ENCODE measurements at regions of chr7 and their contacts with region 1.

Region 1: GRCh38 chr7:150778738-150779301 is 21.3 kb downstream of the TMEM176B start:
- DNase-seq: peak; percentile 58 to 82 (median 79)
- H3K4me3 ChIP-seq: peak overlapping the region in 2 of 3 experiments; percentile 12 to 53
- H3K4me3 Mint-ChIP-seq: peak overlapping the region; percentile 12 to 68
- H3K27ac ChIP-seq: peak overlapping the region in 1 of 2 donors; percentile 44
- H3K27ac Mint-ChIP-seq: peak overlapping the region in 4 of 7 donors; percentile 15 to 88 (median 53)
- H3K4me1 ChIP-seq: peaks cover 37 to 69% of the 10 kb centered on the region in 2 donors
- H3K4me1 Mint-ChIP-seq: peaks cover 63% of the 10 kb centered on the region
- H3K27me3 ChIP-seq: no peaks in the 10 kb centered on the region
- H3K27me3 Mint-ChIP-seq: peaks cover 0 to 8% (median 5%) of the 10 kb centered on the region in 3 donors
- CTCF ChIP-seq: peak; percentile 98

Region 2: GRCh38 chr7:150648353-150649079 is 130.3 kb before region 1 on chr7:
- intact Hi-C with region 1: no loop called
- DNase-seq: no peak
- H3K4me3 ChIP-seq: no peak overlapping the region
- H3K4me3 Mint-ChIP-seq: no peak overlapping the region
- H3K27ac ChIP-seq: no peak overlapping the region
- H3K27ac Mint-ChIP-seq: no peak overlapping the region
- H3K4me1 ChIP-seq: no peaks in the 10 kb centered on the region
- H3K4me1 Mint-ChIP-seq: peaks cover 9% of the 10 kb centered on the region
- H3K27me3 ChIP-seq: no peaks in the 10 kb centered on the region
- H3K27me3 Mint-ChIP-seq: peaks cover 0 to 4% (median 3%) of the 10 kb centered on the region in 3 donors
- CTCF ChIP-seq: no peak

Region 3: DNA sequence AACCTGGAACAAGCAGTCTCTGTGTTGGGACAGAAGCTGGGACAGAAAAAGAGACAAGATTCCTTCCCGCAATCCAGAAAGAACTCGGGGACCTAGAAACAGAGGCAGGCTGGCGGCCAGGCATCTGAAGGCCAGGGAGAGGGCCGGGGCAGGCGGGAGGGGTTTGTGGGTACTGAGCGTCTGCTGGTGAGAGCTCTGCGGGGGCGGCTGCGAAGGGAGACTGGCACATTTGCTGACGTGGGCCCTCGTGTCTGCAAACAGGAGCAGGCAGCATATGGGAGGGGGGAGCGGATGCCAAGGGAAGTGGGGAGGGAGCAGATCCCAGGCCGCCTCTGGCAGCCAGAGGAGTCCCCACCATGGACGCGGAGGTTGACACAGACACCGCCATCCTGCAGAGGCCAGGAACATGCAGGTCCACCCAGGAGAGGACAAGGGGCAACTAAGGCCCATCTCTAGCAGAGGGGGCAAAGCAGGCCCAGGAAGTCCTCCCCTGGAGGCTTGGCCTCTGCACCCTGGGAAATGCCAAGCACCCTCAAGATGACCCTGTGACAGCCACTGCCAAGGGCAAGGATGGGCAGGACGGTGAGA is 167.1 kb after region 1 on chr7:
- intact Hi-C with region 1: no loop called
- DNase-seq: no peak
- H3K4me3 ChIP-seq: no peak overlapping the region
- H3K4me3 Mint-ChIP-seq: no peak overlapping the region
- H3K27ac ChIP-seq: no peak overlapping the region
- H3K27ac Mint-ChIP-seq: no peak overlapping the region
- H3K4me1 ChIP-seq: peaks cover 0 to 4% of the 10 kb centered on the region in 2 donors
- H3K4me1 Mint-ChIP-seq: peaks cover 3% of the 10 kb centered on the region
- H3K27me3 ChIP-seq: peaks cover 0 to 17% of the 10 kb centered on the region in 2 donors
- H3K27me3 Mint-ChIP-seq: peaks cover 13 to 53% (median 20%) of the 10 kb centered on the region in 3 donors
- CTCF ChIP-seq: no peak

Region 4: DNA sequence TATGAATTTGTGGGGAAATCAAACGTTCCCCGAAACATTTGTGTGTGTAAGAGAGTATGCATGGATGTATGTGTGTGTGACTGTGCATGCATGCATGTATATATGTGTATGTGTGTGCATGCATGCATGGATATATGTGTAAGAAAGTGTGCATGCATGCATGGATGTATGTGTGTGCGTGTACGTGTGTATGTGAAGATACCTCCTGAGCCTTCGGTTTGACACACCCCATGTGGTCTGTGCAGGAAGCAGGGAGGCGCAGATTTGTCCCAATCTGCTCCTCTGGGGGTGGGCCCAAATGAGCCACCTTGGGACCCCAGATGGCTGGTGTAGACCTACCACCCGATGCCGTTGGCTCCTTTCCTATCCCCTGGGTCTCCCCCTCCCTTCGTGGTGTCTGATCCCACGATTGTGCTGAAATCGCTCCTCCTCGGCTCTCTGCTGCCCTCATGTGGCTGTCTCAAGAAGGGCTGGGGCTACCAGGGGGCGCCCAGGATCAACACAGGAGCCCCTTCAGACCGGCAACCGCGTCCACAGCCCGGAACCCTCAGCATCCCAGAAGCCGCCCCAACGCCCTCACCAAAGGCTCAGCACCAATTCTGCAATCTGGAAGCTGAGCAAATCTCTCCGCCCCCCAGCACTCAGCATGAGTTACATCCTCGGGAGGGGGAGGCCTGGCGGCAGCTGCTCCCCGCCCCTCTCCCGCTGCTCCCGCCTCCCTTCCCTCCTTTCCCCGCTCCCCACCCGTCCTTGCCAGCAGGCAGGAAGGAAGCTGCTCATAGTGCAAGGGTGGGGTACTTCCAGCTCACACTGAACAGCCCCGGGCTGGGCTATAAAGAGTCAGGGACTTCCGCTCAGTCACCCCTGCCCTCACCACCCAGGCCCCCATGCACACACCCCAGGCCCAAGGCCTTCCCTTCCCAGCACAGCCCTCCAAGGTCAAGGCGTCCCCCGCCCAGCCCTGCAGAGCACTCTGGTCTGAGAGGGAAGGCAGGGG is 209.7 kb after region 1 on chr7:
- intact Hi-C with region 1: loop called (anchors 5 to 10 kb)
- DNase-seq: peak; percentile 18 to 56 (median 20)
- H3K4me3 ChIP-seq: peak overlapping the region in 1 of 3 experiments; percentile 31
- H3K4me3 Mint-ChIP-seq: peak overlapping the region; percentile 55 to 81
- H3K27ac ChIP-seq: no peak overlapping the region
- H3K27ac Mint-ChIP-seq: peak overlapping the region in 2 of 7 donors; percentile 26 to 37
- H3K4me1 ChIP-seq: peaks cover 11 to 15% of the 10 kb centered on the region in 2 donors
- H3K4me1 Mint-ChIP-seq: peaks cover 26% of the 10 kb centered on the region
- H3K27me3 ChIP-seq: peaks cover 0 to 31% of the 10 kb centered on the region in 2 donors
- H3K27me3 Mint-ChIP-seq: peaks cover 30 to 58% (median 37%) of the 10 kb centered on the region in 3 donors
- CTCF ChIP-seq: peak; percentile 86

Measured in CD14-positive monocyte (primary cell).